Dendritic cell treated with granulocyte-macrophage colony-stimulating factor and Interleukin-4, amounts not matched to agents 40 ng/mL and 50 ng/mL, for 4 days (primary cell): ENCODE measurements at regions of chr19 and their contacts with region 1.

Region 1: GRCh38 chr19:42386974-42387707 is 3.0 kb downstream of the CNFN start:
- H3K4me3 Mint-ChIP-seq: peak overlapping the region; percentile 70
- H3K27ac Mint-ChIP-seq: peak overlapping the region; percentile 45
- H3K4me1 Mint-ChIP-seq: peaks cover 7% of the 10 kb centered on the region
- H3K27me3 Mint-ChIP-seq: peaks cover 51% of the 10 kb centered on the region

Region 2: GRCh38 chr19:42295831-42296525 is 91.2 kb before region 1 on chr19:
- intact Hi-C with region 1: no loop called
- H3K4me3 Mint-ChIP-seq: no peak overlapping the region
- H3K27ac Mint-ChIP-seq: no peak overlapping the region
- H3K4me1 Mint-ChIP-seq: peaks cover 9% of the 10 kb centered on the region
- H3K27me3 Mint-ChIP-seq: no peaks in the 10 kb centered on the region

Region 3: GRCh38 chr19:42433503-42434260 is 46.5 kb after region 1 on chr19:
- intact Hi-C with region 1: loop called (anchors 5 kb)
- H3K4me3 Mint-ChIP-seq: no peak overlapping the region
- H3K27ac Mint-ChIP-seq: no peak overlapping the region
- H3K4me1 Mint-ChIP-seq: peaks cover 11% of the 10 kb centered on the region
- H3K27me3 Mint-ChIP-seq: peaks cover 11% of the 10 kb centered on the region